MCF 10A (cell line): ENCODE measurements at regions of chr17 and their contacts with region 1.

Region 1: DNA sequence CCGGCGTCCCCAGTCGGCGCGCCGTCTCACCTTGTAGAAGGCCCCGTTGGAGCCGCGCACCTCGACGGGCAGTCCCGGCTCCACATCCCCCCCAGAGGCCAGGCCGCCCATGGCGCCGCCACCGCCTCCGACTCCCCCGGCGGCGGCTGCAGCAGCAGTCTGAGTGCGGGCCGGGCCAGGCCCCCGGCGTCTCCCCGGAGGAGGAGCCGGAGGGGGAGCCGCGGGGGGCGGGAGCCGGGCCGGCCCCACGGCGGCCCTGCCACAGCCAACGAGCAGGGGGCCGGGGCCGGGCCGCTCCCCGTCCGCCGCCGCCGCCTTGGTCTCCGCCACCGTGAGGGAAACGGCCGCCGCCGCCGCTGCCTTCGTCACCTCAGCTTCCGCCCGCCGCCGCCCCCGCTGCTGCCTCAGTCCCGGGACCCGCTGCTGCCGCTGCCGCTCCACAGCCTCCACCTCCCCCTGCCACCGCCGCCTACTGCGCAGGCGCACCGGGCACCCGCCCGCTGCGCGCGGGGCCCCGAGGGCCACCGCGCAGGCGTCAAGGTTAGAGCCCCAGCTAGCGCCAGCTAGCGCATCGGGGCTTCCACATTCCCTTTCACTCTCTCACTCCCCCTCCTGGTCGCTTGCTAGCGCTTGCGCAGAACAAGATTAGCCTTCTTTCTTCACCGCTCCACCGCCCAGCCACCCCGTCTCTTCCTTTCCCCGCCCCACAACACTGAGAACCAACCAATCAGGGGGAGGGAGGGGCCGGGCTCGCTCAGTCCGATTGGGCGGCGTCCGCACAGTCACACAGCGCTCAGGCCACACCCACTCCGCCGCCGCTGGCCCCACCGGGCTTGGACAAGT is at the start of gene FXR2:
- DNase-seq: peak; percentile 99
- H3K4me3 Mint-ChIP-seq: peak within 1 kb of the TSS; percentile 80
- H3K27ac Mint-ChIP-seq: peak within 1 kb of the TSS; percentile 95
- H3K4me1 Mint-ChIP-seq: peaks cover 32% of the 10 kb centered on the region
- H3K27me3 Mint-ChIP-seq: no peaks in the 10 kb centered on the region
- CTCF ChIP-seq: peak; percentile 37
- total RNA-seq, gene FXR2: 60.7 and 65.1 TPM in 2 replicates

Region 2: GRCh38 chr17:7572588-7573323 is 41.9 kb before region 1 on chr17:
- CTCF ChIA-PET with region 1: interaction called, 4 read pairs
- POLR2A ChIA-PET with region 1: interaction called, 11 read pairs
- intact Hi-C with region 1: no loop called
- DNase-seq: peak; percentile 99
- H3K4me3 Mint-ChIP-seq: peak overlapping the region; percentile 90
- H3K27ac Mint-ChIP-seq: peak overlapping the region; percentile 99
- H3K4me1 Mint-ChIP-seq: peaks cover 11% of the 10 kb centered on the region
- H3K27me3 Mint-ChIP-seq: no peaks in the 10 kb centered on the region
- CTCF ChIP-seq: no peak

Region 3: GRCh38 chr17:7583253-7584109 is 31.2 kb before region 1 on chr17 and contains the start of gene MPDU1:
- CTCF ChIA-PET with region 1: interaction called, 15 read pairs
- POLR2A ChIA-PET with region 1: interaction called, 206 read pairs
- intact Hi-C with region 1: no loop called
- DNase-seq: peak; percentile 98
- H3K4me3 Mint-ChIP-seq: peak within 1 kb of the TSS; percentile 93
- H3K27ac Mint-ChIP-seq: peak within 1 kb of the TSS; percentile 100
- H3K4me1 Mint-ChIP-seq: peaks cover 56% of the 10 kb centered on the region
- H3K27me3 Mint-ChIP-seq: no peaks in the 10 kb centered on the region
- CTCF ChIP-seq: no peak
- total RNA-seq, gene MPDU1: 52.0 and 56.5 TPM in 2 replicates

Region 4: GRCh38 chr17:7589204-7589868 is 25.3 kb before region 1 on chr17:
- CTCF ChIA-PET with region 1: interaction called, 15 read pairs
- POLR2A ChIA-PET with region 1: interaction called, 206 read pairs
- intact Hi-C with region 1: loop called (anchors 2 kb)
- DNase-seq: peak; percentile 92
- H3K4me3 Mint-ChIP-seq: peak overlapping the region; percentile 76
- H3K27ac Mint-ChIP-seq: peak overlapping the region; percentile 78
- H3K4me1 Mint-ChIP-seq: peaks cover 42% of the 10 kb centered on the region
- H3K27me3 Mint-ChIP-seq: no peaks in the 10 kb centered on the region
- CTCF ChIP-seq: peak; percentile 88

Region 5: GRCh38 chr17:7627250-7628121 is 12.8 kb after region 1 on chr17 and contains the start of gene SAT2:
- CTCF ChIA-PET with region 1: interaction called, 15 read pairs
- POLR2A ChIA-PET with region 1: interaction called, 67 read pairs
- intact Hi-C with region 1: no loop called
- DNase-seq: peak; percentile 95
- H3K4me3 Mint-ChIP-seq: peak within 1 kb of the TSS; percentile 84
- H3K27ac Mint-ChIP-seq: peak within 1 kb of the TSS; percentile 93
- H3K4me1 Mint-ChIP-seq: no peaks in the 10 kb centered on the region
- H3K27me3 Mint-ChIP-seq: no peaks in the 10 kb centered on the region
- CTCF ChIP-seq: no peak
- total RNA-seq, gene SAT2: 66.8 and 82.7 TPM in 2 replicates

Region 6: GRCh38 chr17:7632492-7632894 is 17.9 kb after region 1 on chr17:
- CTCF ChIA-PET with region 1: interaction called, 15 read pairs
- POLR2A ChIA-PET with region 1: interaction called, 67 read pairs
- intact Hi-C with region 1: no loop called
- DNase-seq: peak; percentile 69
- H3K4me3 Mint-ChIP-seq: no peak overlapping the region
- H3K27ac Mint-ChIP-seq: no peak overlapping the region
- H3K4me1 Mint-ChIP-seq: no peaks in the 10 kb centered on the region
- H3K27me3 Mint-ChIP-seq: no peaks in the 10 kb centered on the region
- CTCF ChIP-seq: peak; percentile 63

Region 7: DNA sequence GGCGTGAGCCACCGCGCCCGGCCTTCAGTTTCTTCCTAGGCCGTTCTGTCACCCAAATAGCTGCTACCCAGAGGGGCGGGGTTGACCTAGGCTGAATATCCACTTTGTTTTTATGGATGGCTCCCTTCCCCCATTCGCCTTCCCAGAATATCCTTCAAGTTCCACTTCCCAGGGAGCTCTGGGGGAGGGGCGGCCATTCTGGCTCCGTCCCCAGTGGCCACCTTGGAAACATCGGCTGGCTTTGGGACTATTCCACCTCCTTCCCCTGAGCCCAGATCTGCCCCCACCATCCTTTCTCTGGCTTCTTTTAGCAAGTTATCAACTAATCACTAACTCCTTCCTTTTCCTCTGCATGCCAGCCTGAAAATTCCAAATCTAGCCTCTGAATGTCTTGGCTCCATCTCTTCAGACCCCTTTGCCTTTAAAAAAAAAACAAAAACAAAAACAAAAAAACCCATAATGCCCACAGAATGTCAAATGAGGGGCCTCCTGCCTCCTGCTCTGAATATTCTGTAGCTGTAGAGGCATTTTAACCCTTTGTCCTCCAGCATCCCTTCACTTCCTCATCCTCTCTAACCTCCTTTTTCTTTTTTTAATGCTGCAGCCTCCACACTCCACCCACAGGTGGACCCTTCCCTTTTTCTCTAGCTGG is 42.4 kb after region 1 on chr17:
- CTCF ChIA-PET with region 1: no interaction called
- POLR2A ChIA-PET with region 1: no interaction called
- intact Hi-C with region 1: no loop called
- DNase-seq: no peak
- H3K4me3 Mint-ChIP-seq: no peak overlapping the region
- H3K27ac Mint-ChIP-seq: no peak overlapping the region
- H3K4me1 Mint-ChIP-seq: peaks cover 6% of the 10 kb centered on the region
- H3K27me3 Mint-ChIP-seq: peaks cover 50% of the 10 kb centered on the region
- CTCF ChIP-seq: no peak

Region 8: DNA sequence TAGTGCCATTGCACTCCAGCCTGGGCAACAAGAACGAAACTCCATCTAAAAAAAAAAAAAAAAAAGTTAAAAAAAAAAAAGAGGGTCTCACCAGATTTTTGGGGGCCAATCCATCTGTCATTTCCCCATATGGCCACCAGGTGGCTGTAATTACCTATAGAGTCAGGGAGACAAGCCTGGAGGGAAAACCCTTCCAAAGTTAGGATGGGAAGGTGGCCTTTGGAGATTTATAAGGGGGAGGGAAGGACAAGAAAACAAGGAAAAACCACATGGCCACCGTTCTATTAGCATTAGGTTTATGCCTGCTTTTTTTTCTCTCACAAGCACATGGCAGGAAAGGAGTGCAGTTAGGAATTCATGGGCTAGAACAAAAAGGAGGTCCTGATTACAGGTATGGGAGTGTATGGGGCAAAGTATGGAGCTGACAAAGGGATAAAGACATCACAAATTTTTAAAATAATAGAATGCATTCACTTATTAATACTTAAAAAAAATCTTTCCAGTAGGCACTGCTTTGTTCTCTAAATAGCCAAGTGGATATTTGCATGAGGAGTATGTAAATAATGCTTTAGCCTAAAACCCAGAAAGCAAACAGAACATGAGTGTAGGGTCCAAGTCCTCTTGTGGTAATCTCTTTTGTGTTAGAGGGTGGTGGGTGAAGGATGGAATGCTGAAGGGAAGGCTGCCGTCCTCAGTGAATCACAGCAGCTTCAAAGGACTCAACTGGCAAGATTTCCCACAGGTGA is 248.2 kb after region 1 on chr17:
- CTCF ChIA-PET with region 1: no interaction called
- POLR2A ChIA-PET with region 1: no interaction called
- intact Hi-C with region 1: no loop called
- DNase-seq: peak; percentile 62
- H3K4me3 Mint-ChIP-seq: no peak overlapping the region
- H3K27ac Mint-ChIP-seq: no peak overlapping the region
- H3K4me1 Mint-ChIP-seq: peaks cover 11% of the 10 kb centered on the region
- H3K27me3 Mint-ChIP-seq: no peaks in the 10 kb centered on the region
- CTCF ChIP-seq: peak; percentile 75